BJ (cell line): ENCODE measurements at regions of chr22 and their contacts with region 1.

Region 1: DNA sequence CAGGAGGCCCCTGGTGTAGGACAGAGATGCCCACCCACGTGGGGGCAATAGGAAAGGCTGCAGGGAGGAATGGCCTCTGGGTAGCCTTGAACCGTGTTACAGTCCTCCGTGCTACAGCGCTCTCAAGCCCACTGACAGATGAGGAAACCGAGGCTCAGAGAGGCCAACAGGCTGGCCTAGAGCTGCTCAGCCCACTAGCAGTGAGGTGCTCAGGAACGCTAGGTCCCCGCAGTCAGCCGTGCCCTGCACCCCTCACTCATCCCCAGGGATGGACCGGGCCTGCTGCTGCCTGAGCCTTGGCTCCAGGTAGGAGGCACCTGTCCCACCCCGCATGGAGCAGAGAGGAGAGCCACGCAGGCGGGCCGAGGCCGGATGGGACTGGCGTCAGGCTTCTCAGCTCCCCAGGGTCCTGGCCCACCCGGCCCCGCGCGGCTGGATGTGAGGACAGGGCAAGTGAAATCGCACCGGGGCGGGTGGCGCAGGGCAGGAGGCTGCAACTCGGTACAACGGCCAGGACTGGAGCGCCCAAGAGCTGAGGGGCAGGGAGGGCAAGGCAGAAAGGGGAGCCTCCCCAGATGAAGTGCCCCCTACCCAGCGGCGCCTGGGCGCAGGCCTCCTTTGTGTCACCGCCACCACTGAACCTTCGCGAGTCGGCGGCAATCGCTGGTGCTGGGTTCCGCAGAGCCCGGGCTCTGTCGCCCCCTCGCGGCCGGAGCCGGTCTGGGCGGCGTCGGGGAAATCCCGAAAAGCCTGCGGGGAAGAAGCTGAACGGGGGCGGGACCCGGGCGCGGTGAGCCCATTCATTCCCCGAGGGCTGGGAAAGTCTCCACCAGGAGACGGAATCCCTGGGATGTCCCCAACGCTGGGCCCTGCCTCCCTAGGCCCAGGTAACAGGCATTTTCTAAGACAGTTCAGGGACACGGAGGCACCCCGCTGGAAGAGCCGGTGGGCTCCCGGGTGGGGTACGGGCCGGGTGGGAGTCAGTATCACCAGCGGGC is 8.4 kb upstream of the SLC2A11 start:
- DNase-seq: no peak
- H3K4me3 ChIP-seq: no peak overlapping the region
- H3K27me3 ChIP-seq: no peaks in the 10 kb centered on the region
- CTCF ChIP-seq: peak; percentile 98

Region 2: GRCh38 chr22:23767673-23768548 is 81.4 kb before region 1 on chr22 and contains the start of gene CHCHD10:
- CTCF ChIA-PET with region 1: interaction called, 272 read pairs
- POLR2A ChIA-PET with region 1: interaction called, 7 read pairs
- DNase-seq: no peak
- H3K4me3 ChIP-seq: peak within 1 kb of the TSS; percentile 61
- H3K27me3 ChIP-seq: no peaks in the 10 kb centered on the region
- CTCF ChIP-seq: peak; percentile 86
- polyA plus RNA-seq, gene CHCHD10: 22.1 and 22.5 TPM in 2 replicates

Region 3: GRCh38 chr22:23777786-23778576 is 71.3 kb before region 1 on chr22:
- CTCF ChIA-PET with region 1: interaction called, 272 read pairs
- POLR2A ChIA-PET with region 1: no interaction called
- DNase-seq: no peak
- H3K4me3 ChIP-seq: no peak overlapping the region
- H3K27me3 ChIP-seq: no peaks in the 10 kb centered on the region
- CTCF ChIP-seq: no peak

Region 4: DNA sequence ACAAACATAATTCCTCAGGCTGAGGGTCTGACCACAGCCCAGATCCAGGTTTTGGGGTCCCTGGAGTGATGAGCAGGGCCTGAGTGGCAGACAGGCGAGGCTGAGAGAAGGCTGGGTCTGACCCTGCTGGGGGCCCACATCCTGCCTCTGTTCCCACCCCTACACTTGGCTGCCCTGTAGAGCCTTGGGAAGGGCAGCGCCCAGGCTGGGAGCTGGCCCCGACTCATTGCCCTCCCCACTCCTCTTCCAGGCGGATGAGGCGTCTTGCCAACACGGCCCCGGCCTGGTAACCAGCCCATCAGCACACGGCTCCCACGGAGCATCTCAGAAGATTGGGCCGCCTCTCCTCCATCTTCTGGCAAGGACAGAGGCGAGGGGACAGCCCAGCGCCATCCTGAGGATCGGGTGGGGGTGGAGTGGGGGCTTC is 15.4 kb before region 1 on chr22:
- CTCF ChIA-PET with region 1: interaction called, 10 read pairs
- POLR2A ChIA-PET with region 1: no interaction called
- DNase-seq: no peak
- H3K4me3 ChIP-seq: no peak overlapping the region
- H3K27me3 ChIP-seq: no peaks in the 10 kb centered on the region
- CTCF ChIP-seq: no peak

Region 5: DNA sequence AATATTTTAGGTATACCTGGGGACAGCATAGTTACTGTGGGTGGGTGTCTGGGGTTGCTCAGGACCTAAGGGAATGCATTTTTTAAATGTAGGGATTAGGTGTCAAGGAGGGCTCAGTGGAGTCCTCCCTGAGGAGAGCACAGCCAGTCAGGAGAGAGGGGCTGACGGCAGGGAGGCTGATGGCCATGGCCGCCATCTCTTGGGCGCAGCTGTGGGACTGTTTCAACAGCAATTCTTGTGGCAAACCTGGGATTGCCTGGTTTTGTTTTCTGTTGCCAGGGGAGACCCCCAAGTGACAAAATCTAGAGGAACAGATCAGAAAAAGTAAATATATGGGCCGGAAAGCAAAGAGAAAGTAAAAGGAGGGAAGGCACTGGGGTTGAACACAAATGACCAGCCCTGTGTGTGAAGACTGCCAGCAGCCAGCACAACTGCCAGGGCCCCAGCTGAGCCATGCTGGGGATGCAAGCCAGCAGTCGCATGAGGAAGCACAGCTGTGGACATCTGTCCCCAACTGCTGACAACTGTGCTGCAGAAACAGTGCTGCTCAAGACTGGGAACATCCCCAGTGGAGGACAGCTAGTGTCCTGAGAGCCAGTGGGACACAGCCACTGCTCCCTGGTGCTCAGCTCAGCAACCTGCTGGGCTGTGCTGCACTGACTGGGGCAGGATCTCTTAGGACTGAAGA is 55.4 kb after region 1 on chr22:
- CTCF ChIA-PET with region 1: no interaction called
- POLR2A ChIA-PET with region 1: no interaction called
- DNase-seq: no peak
- H3K4me3 ChIP-seq: no peak overlapping the region
- H3K27me3 ChIP-seq: no peaks in the 10 kb centered on the region
- CTCF ChIP-seq: no peak